CD14-positive monocyte (primary cell): ENCODE measurements at regions of chr6 and their contacts with region 1.

Region 1: GRCh38 chr6:31079656-31080261 is 32.6 kb downstream of the C6orf15 start:
- DNase-seq: peak; percentile 27 to 49 (median 34)
- H3K4me3 ChIP-seq: peak overlapping the region in 1 of 3 experiments; percentile 51
- H3K4me3 Mint-ChIP-seq: peak overlapping the region in 1 of 2 donors; percentile 75
- H3K27ac ChIP-seq: no peak overlapping the region
- H3K27ac Mint-ChIP-seq: no peak overlapping the region
- H3K4me1 ChIP-seq: peaks cover 4 to 5% of the 10 kb centered on the region in 2 donors
- H3K4me1 Mint-ChIP-seq: peaks cover 4% of the 10 kb centered on the region
- H3K27me3 ChIP-seq: no peaks in the 10 kb centered on the region
- H3K27me3 Mint-ChIP-seq: peaks cover 0 to 15% (median 7%) of the 10 kb centered on the region in 3 donors
- CTCF ChIP-seq: peak; percentile 83

Region 2: GRCh38 chr6:30470968-30471367 is 608.8 kb before region 1 on chr6:
- intact Hi-C with region 1: loop called in 1 of 2 experiments (anchors 10 kb)
- DNase-seq: no peak
- H3K4me3 ChIP-seq: no peak overlapping the region
- H3K4me3 Mint-ChIP-seq: peak overlapping the region in 1 of 2 donors; percentile 67
- H3K27ac ChIP-seq: no peak overlapping the region
- H3K27ac Mint-ChIP-seq: no peak overlapping the region
- H3K4me1 ChIP-seq: peaks cover 10% of the 10 kb centered on the region in 2 donors
- H3K4me1 Mint-ChIP-seq: peaks cover 11% of the 10 kb centered on the region
- H3K27me3 ChIP-seq: peaks cover 68 to 74% of the 10 kb centered on the region in 2 donors
- H3K27me3 Mint-ChIP-seq: peaks cover 77 to 90% (median 84%) of the 10 kb centered on the region in 3 donors
- CTCF ChIP-seq: no peak

Region 3: GRCh38 chr6:30640476-30640875 is 439.3 kb before region 1 on chr6:
- intact Hi-C with region 1: no loop called
- DNase-seq: no peak
- H3K4me3 ChIP-seq: no peak overlapping the region
- H3K4me3 Mint-ChIP-seq: no peak overlapping the region
- H3K27ac ChIP-seq: no peak overlapping the region
- H3K27ac Mint-ChIP-seq: no peak overlapping the region
- H3K4me1 ChIP-seq: peaks cover 25 to 27% of the 10 kb centered on the region in 2 donors
- H3K4me1 Mint-ChIP-seq: peaks cover 32% of the 10 kb centered on the region
- H3K27me3 ChIP-seq: no peaks in the 10 kb centered on the region
- H3K27me3 Mint-ChIP-seq: peaks cover 0 to 1% (median 0%) of the 10 kb centered on the region in 3 donors
- CTCF ChIP-seq: no peak

Region 4: DNA sequence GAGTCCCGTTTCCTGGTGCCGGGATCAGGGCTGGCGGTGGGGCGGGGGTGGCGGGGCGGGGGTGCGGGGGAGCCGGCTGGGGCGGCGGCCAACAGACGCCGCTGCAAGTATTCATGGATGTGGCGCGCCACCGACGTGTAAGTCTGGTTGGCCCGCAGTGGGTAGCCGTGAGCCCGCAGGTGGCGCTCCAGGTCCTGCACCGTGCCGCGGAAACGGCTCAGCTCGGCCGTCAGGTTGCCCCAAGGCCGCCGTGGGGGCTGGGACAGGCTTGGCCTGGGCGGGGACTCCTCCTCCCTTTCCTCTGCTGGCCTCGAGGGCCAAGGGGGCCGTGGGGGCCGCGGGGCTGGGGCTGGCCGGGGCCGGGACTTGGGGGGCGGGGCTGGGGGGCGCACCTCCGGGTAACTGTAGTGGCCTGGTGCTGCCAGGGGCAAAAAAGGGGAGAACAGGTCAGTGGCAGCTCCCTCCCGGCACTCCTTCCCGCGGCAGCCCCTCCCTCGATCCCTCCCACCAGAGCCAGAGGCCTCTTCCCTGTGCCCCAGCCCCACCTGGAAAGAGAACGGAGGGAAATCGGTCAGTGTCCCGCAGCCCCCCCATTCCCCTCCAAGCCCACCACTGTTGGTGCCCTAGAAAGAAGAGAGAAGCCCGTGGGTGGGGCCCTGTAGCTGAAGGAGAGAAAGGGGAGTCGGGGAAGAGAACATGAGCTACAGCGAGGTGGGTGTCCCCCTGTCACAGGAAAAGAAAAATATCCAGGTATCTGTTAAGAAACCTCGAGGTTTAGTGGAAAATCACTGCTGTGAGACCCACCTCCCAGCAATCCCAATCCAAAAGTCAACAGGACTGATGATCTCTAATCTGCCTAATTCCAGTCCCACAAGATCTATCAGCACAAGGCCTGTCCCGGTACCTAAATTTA is 1008.1 kb after region 1 on chr6:
- intact Hi-C with region 1: no loop called
- DNase-seq: peak; percentile 14 to 36 (median 14)
- H3K4me3 ChIP-seq: no peak overlapping the region
- H3K4me3 Mint-ChIP-seq: no peak overlapping the region
- H3K27ac ChIP-seq: no peak overlapping the region
- H3K27ac Mint-ChIP-seq: no peak overlapping the region
- H3K4me1 ChIP-seq: no peaks in the 10 kb centered on the region
- H3K4me1 Mint-ChIP-seq: no peaks in the 10 kb centered on the region
- H3K27me3 ChIP-seq: peaks cover 10 to 34% of the 10 kb centered on the region in 2 donors
- H3K27me3 Mint-ChIP-seq: peaks cover 31 to 69% (median 43%) of the 10 kb centered on the region in 3 donors
- CTCF ChIP-seq: peak; percentile 19